PC-3 (cell line): ENCODE measurements at regions of chr18 and their contacts with region 1.

Region 1: GRCh38 chr18:3604498-3605408 is 154.8 kb downstream of the TGIF1 start:
- DNase-seq: peak; percentile 94
- ATAC-seq: peak; percentile 38
- H3K4me3 ChIP-seq: peak overlapping the region; percentile 70
- H3K27ac ChIP-seq: peak overlapping the region; percentile 99
- H3K4me1 ChIP-seq: peaks cover 42% of the 10 kb centered on the region
- H3K27me3 ChIP-seq: no peaks in the 10 kb centered on the region
- CTCF ChIP-seq: no peak

Region 2: DNA sequence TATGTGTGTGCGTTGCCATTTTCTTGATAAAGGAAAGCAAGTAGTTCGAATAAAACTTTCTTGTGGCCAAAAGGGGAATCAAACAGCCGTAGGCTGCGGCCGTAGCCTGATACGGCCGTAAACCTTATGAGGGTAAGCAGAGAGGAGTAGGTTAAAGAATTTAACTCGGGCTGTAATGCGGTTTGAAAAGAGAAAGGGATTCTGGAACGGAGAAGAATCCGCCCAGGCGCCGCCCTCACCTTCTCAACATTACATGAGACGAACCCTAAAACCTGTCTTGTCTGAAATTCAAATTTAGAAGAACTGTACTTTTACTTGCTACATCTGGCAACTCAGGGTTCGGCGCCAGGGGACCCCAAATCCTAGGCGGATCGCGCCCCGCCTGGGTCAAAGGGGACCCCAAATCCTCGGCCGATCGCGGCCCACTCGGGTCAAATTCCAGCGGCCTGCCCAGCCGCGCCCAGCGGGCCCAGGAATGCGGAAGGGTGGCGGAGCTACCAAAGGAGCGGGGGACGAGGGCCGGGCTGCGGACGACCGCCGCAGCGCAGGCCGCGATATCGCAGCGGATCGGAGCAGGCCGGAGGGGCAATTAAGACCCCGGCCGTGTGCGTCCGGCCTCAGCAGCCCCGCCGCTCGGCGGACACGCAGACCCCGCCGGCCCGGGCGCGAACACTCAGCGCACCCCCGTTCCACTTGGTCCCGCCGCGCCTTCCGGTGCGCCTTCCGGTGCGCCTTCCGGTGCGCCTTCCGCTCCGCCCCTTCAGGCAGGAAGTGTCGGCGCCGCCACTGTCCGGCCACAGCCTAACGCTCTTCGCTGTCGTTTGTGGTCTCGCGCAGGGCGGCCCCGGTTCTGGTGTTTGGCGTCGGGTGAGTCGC is 343.1 kb before region 1 on chr18 and contains the start of gene MYL12B:
- CTCF ChIA-PET with region 1: no interaction called
- POLR2A ChIA-PET with region 1: interaction called, 8 read pairs
- intact Hi-C with region 1: loop called (anchors 5 kb)
- DNase-seq: peak; percentile 83
- ATAC-seq: peak; percentile 66
- H3K4me3 ChIP-seq: peak within 1 kb of the TSS; percentile 86
- H3K27ac ChIP-seq: peak within 1 kb of the TSS; percentile 87
- H3K4me1 ChIP-seq: peaks cover 51% of the 10 kb centered on the region
- H3K27me3 ChIP-seq: no peaks in the 10 kb centered on the region
- CTCF ChIP-seq: no peak
- total RNA-seq, gene MYL12B: 233 and 308 TPM in 2 replicates

Region 3: GRCh38 chr18:3281456-3282400 is 323.0 kb before region 1 on chr18:
- CTCF ChIA-PET with region 1: no interaction called
- POLR2A ChIA-PET with region 1: interaction called, 12 read pairs
- intact Hi-C with region 1: no loop called
- DNase-seq: peak; percentile 96
- ATAC-seq: peak; percentile 64
- H3K4me3 ChIP-seq: no peak overlapping the region
- H3K27ac ChIP-seq: no peak overlapping the region
- H3K4me1 ChIP-seq: peaks cover 27% of the 10 kb centered on the region
- H3K27me3 ChIP-seq: no peaks in the 10 kb centered on the region
- CTCF ChIP-seq: peak; percentile 87

Region 4: DNA sequence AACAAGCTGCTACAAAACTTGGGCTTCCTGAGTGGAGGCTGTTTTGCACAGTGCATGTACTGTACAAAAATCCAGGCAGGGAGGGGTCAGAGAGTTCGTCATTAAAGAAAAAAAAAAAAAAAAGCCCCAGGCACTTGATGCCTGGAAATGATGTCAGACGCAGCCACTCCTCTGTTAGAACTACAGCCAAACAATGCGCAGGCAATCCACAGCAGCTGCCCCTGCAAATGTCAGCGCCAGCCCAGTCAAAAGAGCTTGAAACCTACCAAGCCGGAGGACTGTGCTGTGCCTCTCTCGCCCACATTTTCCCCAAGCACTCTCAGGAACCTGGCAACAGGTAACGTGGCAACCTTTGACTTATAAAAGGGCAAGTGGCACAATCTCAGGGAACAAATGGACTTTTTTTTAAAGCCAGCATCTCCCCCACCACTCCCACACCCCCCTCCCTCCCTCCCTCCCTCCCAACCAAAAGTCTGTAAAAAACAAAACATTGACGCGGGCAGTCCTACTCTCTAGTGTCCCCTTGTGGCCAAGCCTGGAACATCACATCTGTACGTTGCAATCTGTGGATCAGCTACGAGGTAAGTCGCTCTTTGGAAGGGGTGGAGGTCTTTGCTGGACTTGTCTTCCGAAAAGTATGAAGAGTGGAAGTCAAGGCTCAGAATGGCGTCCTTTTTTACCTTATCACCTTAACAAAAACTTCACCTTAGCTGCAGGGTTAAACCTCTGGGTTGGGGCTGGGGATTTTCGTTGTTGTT is 10.7 kb before region 1 on chr18:
- CTCF ChIA-PET with region 1: interaction called, 8 read pairs
- POLR2A ChIA-PET with region 1: interaction called, 44 read pairs
- intact Hi-C with region 1: loop called (anchors 1 kb)
- DNase-seq: peak; percentile 94
- ATAC-seq: peak; percentile 50
- H3K4me3 ChIP-seq: peak overlapping the region; percentile 60
- H3K27ac ChIP-seq: peak overlapping the region; percentile 99
- H3K4me1 ChIP-seq: peaks cover 45% of the 10 kb centered on the region
- H3K27me3 ChIP-seq: no peaks in the 10 kb centered on the region
- CTCF ChIP-seq: peak; percentile 81

Region 5: GRCh38 chr18:3623769-3624545 is 19.2 kb after region 1 on chr18:
- CTCF ChIA-PET with region 1: interaction called, 5 read pairs
- POLR2A ChIA-PET with region 1: interaction called, 37 read pairs
- intact Hi-C with region 1: loop called (anchors 1 kb)
- DNase-seq: peak; percentile 98
- ATAC-seq: peak; percentile 81
- H3K4me3 ChIP-seq: peak overlapping the region; percentile 53
- H3K27ac ChIP-seq: peak overlapping the region; percentile 98
- H3K4me1 ChIP-seq: peaks cover 50% of the 10 kb centered on the region
- H3K27me3 ChIP-seq: no peaks in the 10 kb centered on the region
- CTCF ChIP-seq: no peak

Region 6: DNA sequence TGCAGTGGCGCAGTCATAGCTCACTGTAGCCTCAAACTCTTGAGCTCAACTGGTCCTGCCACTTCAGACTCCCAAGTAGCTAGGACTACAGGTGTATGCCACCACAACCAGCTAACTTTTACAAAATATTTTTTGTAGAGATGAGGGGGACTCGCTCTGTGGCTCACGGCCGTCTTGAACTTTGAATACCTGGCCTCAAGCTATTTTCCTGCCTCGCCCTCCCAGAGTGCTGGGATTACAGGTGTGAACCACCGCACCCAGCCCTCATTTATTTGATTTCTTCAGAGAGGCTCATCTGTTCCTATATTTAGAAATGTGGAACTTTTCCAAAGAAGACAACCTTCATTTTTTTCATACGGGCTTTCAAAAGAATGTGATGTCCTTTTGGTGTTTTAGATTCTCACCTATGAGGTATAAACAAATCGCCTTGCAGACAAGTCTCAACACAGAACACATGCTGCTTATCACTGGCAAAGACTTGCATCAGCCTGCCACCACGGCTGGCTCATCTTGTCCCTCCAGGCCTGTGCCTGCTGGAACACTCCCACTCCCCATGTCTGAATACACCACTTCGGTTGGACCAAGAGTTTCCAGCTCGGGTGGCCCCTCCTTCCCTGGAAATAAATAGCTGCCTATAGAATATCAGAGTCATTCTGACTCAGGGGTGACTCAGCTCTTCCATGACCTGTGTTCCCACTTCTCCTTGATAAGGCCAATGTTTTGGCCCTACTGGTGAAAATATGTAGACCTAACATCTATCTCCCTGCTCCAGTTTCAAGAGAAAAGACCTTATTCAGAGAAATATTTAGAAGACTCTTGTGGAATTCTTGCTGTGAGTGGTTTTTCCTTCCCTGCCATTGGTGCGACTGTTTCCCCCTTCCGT is 47.9 kb after region 1 on chr18:
- CTCF ChIA-PET with region 1: interaction called, 8 read pairs
- POLR2A ChIA-PET with region 1: interaction called, 14 read pairs
- intact Hi-C with region 1: loop called (anchors 2 kb)
- DNase-seq: peak; percentile 99
- ATAC-seq: peak; percentile 97
- H3K4me3 ChIP-seq: no peak overlapping the region
- H3K27ac ChIP-seq: peak overlapping the region; percentile 86
- H3K4me1 ChIP-seq: peaks cover 42% of the 10 kb centered on the region
- H3K27me3 ChIP-seq: no peaks in the 10 kb centered on the region
- CTCF ChIP-seq: 0 out of 2 replicates have a peak, but pooled peaks have one; percentile 12

Region 7: GRCh38 chr18:5475267-5475666 is 1870.5 kb after region 1 on chr18:
- CTCF ChIA-PET with region 1: no interaction called
- POLR2A ChIA-PET with region 1: interaction called, 18 read pairs
- intact Hi-C with region 1: no loop called
- DNase-seq: no peak
- ATAC-seq: no peak
- H3K4me3 ChIP-seq: no peak overlapping the region
- H3K27ac ChIP-seq: no peak overlapping the region
- H3K4me1 ChIP-seq: no peaks in the 10 kb centered on the region
- H3K27me3 ChIP-seq: no peaks in the 10 kb centered on the region
- CTCF ChIP-seq: no peak